ENCODE measurements at regions of chr12 and their contacts with region 1.

Region 1: GRCh38 chr12:47079468-47079980 is at the starts of genes AMIGO2 and PCED1B:
- DNase-seq: peak; percentile 70 to 80
- ATAC-seq: peak; percentile 44 to 85 (median 74)
- H3K4me3 ChIP-seq: peak within 1 kb of the TSS; percentile 57 to 80 (median 71)
- H3K27ac ChIP-seq: peak within 1 kb of the TSS; percentile 76 to 92 (median 90)
- H3K4me1 ChIP-seq: peaks cover 0 to 41% (median 15%) of the 10 kb centered on the region in 9 donors
- H3K27me3 ChIP-seq: peaks cover 0 to 22% (median 11%) of the 10 kb centered on the region in 7 donors
- CTCF ChIP-seq: peak in 7 of 9 donors; percentile 23 to 62 (median 45)
- total RNA-seq, gene AMIGO2: 1.1 to 3.2 (median 1.9) TPM
- total RNA-seq, gene PCED1B: 0.49 to 4.8 (median 0.87) TPM

Region 2: DNA sequence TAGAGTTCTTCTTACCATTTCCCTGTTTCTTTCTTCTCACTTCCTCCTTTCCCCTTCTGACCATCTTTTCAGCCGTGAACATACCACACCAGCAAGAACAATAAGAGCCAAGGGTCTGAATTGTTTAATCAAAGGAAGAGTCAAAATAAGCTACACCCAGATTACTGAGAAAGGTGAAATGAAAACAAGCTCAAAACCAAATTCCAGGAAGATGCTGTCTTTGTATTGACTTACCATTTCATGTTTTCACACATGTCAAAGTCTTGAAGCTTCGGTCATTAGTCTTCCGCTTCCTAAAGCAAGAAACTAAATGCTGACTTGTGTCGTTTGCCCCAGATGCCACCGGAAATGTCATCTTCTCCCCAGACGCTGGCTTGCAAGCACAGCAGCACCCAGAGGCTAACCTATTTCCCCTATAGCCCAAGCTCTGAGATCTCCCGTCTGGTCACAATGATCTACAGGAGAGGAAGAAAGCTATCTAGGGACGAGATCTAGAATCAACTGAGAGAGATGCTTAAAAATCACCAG is 136.7 kb after region 1 on chr12:
- intact Hi-C with region 1: loop called in 1 of 10 experiments (anchors 10 kb)
- DNase-seq: no peak
- ATAC-seq: peak in 7 of 8 donors; percentile 63 to 85 (median 76)
- H3K4me3 ChIP-seq: peak overlapping the region in 6 of 10 donors; percentile 7 to 55 (median 14)
- H3K27ac ChIP-seq: peak overlapping the region in 3 of 10 donors; percentile 42 to 88 (median 44)
- H3K4me1 ChIP-seq: peaks cover 0 to 14% (median 0%) of the 10 kb centered on the region in 9 donors
- H3K27me3 ChIP-seq: no peaks in the 10 kb centered on the region
- CTCF ChIP-seq: no peak

Region 3: GRCh38 chr12:47312808-47313426 is 233.4 kb after region 1 on chr12:
- intact Hi-C with region 1: loop called in 4 of 10 experiments (anchors 5 to 10 kb)
- DNase-seq: no peak
- ATAC-seq: no peak
- H3K4me3 ChIP-seq: no peak overlapping the region
- H3K27ac ChIP-seq: no peak overlapping the region
- H3K4me1 ChIP-seq: peaks cover 0 to 31% (median 16%) of the 10 kb centered on the region in 9 donors
- H3K27me3 ChIP-seq: no peaks in the 10 kb centered on the region
- CTCF ChIP-seq: no peak

Region 4: GRCh38 chr12:47383942-47384341 is 304.4 kb after region 1 on chr12:
- intact Hi-C with region 1: loop called in 3 of 10 experiments (anchors 5 to 10 kb)
- DNase-seq: no peak
- ATAC-seq: peak in 4 of 8 donors; percentile 37 to 83 (median 54)
- H3K4me3 ChIP-seq: no peak overlapping the region
- H3K27ac ChIP-seq: no peak overlapping the region
- H3K4me1 ChIP-seq: peaks cover 0 to 18% (median 14%) of the 10 kb centered on the region in 9 donors
- H3K27me3 ChIP-seq: peaks cover 0 to 6% (median 0%) of the 10 kb centered on the region in 7 donors
- CTCF ChIP-seq: no peak